MCF 10A (cell line): ENCODE measurements at regions of chr2 and their contacts with region 1.

Region 1: GRCh38 chr2:187499941-187500532 is 52.0 kb upstream of the CALCRL start:
- DNase-seq: peak; percentile 76
- H3K4me3 Mint-ChIP-seq: no peak overlapping the region
- H3K27ac Mint-ChIP-seq: no peak overlapping the region
- H3K4me1 Mint-ChIP-seq: peaks cover 12% of the 10 kb centered on the region
- H3K27me3 Mint-ChIP-seq: no peaks in the 10 kb centered on the region
- CTCF ChIP-seq: peak; percentile 79

Region 2: DNA sequence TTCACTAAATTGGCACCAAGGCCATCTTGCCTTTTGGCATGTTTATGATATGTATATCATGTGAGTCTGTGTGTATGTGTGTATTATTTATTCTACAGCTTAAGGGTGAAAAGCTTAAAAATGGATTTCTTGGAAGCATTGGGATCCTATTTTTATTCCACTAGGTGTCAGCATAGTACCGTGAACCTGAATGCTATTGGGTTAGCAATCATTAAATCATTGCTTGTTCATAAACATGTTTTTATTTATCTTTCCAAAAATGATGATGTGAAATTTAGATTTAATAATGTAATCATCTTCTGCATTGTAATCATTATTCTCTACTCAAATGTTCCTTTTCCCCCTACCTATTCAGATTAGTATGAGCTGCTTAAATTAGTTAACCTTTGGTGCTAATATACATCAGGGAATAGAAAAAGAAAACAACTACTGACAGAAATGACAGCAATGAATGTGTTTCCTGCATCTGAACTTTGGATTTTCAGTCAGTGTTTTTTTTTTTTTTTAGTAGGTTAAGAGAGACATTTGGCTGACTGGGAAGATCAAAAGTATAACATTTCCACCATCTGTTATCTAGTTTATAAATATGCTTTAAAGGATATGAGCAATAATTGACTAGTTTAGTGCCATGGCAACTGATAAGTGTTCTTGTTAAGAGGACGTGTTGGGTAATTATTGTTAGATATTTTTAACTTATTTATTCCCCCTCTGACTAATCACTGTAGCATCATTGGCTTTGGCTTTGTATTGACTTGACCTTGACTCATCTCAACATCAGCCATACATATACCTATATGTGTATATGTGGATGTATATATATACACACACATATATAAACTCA is 636.9 kb before region 1 on chr2:
- CTCF ChIA-PET with region 1: interaction called, 7 read pairs
- POLR2A ChIA-PET with region 1: no interaction called
- intact Hi-C with region 1: loop called (anchors 5 kb)
- DNase-seq: peak; percentile 57
- H3K4me3 Mint-ChIP-seq: no peak overlapping the region
- H3K27ac Mint-ChIP-seq: no peak overlapping the region
- H3K4me1 Mint-ChIP-seq: no peaks in the 10 kb centered on the region
- H3K27me3 Mint-ChIP-seq: no peaks in the 10 kb centered on the region
- CTCF ChIP-seq: peak; percentile 74

Region 3: DNA sequence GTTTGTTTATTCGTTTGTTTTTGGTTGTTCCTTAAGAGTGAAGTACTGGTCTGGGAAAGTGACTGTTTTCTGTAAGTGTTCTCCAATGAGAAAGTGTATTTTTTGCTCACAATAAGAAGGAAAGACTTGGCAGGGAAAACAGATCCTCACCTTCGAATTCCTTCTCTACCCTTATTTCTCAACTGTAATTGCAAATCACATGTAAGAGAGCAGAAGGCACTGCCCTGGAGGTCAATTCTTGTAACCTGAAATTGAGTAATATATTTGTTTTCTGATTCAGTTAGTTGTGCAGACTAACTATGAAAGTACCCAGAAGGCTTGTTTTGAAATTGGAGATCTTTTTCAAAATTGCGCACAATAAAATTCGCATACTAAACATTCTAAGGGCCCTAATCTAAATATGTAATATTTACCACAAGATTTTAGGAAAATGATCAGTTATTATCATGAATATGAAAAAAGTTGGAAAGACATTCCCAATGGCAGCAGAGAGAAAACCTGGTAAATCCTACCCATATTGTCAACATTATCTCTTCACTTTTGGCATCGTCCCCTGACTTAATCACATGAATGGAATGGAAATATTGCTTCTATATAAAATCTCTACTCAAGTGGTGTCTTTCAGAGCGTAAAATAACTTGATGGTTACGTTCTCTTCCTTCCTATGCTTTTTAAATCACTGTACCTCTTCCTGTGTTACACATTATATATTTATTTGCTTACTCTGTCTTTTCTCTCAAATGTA is 30.1 kb after region 1 on chr2:
- CTCF ChIA-PET with region 1: interaction called, 39 read pairs
- POLR2A ChIA-PET with region 1: interaction called, 6 read pairs
- intact Hi-C with region 1: no loop called
- DNase-seq: peak; percentile 91
- H3K4me3 Mint-ChIP-seq: peak overlapping the region; percentile 59
- H3K27ac Mint-ChIP-seq: peak overlapping the region; percentile 82
- H3K4me1 Mint-ChIP-seq: peaks cover 34% of the 10 kb centered on the region
- H3K27me3 Mint-ChIP-seq: no peaks in the 10 kb centered on the region
- CTCF ChIP-seq: no peak

Region 4: DNA sequence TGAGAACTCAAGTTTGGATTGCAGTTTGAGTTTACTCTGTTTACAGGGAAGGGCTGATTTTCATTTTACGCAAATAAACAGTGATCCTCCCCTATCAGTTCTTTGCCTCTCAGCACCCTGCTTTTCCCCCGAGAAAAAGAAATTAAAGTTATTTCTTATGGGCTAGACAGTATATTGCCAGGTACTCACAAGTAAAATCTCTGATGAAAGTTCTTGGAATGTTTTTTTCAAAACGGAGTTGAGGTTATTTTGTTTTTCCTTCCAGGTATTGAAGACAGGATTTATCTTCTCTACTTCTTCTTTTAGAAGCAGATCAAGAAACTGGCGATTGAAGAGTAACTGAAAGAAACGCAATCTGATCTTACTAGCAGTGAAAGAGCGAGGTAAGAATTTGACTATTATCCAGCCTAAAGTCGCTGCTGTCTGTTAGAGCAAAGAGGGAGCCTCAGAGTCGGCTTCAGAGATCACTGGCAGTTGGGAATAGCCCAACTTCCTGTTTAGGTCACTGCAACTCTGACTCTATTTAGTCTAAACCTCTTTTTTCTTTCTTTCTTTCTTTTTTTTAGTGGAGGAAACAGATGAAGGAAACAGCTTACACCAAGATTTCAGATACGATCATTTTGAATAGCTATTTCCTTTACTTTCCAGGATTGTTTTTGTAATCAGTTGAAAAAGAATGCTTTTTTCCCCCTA is 54.1 kb after region 1 on chr2 and contains the start of gene TFPI:
- CTCF ChIA-PET with region 1: interaction called, 25 read pairs
- POLR2A ChIA-PET with region 1: interaction called, 13 read pairs
- intact Hi-C with region 1: no loop called
- DNase-seq: peak; percentile 72
- H3K4me3 Mint-ChIP-seq: peak within 1 kb of the TSS; percentile 87
- H3K27ac Mint-ChIP-seq: peak within 1 kb of the TSS; percentile 98
- H3K4me1 Mint-ChIP-seq: peaks cover 20% of the 10 kb centered on the region
- H3K27me3 Mint-ChIP-seq: no peaks in the 10 kb centered on the region
- CTCF ChIP-seq: no peak
- total RNA-seq, gene TFPI: 67.4 and 71.1 TPM in 2 replicates

Region 5: GRCh38 chr2:187574969-187575750 is 75.1 kb after region 1 on chr2:
- CTCF ChIA-PET with region 1: interaction called, 363 read pairs
- POLR2A ChIA-PET with region 1: interaction called, 44 read pairs
- intact Hi-C with region 1: loop called (anchors 1 kb)
- DNase-seq: peak; percentile 11
- H3K4me3 Mint-ChIP-seq: no peak overlapping the region
- H3K27ac Mint-ChIP-seq: peak overlapping the region; percentile 77
- H3K4me1 Mint-ChIP-seq: peaks cover 9% of the 10 kb centered on the region
- H3K27me3 Mint-ChIP-seq: no peaks in the 10 kb centered on the region
- CTCF ChIP-seq: no peak

Region 6: GRCh38 chr2:188291617-188292347 is 791.7 kb after region 1 on chr2 and contains the start of gene GULP1:
- CTCF ChIA-PET with region 1: interaction called, 4 read pairs
- POLR2A ChIA-PET with region 1: interaction called, 3 read pairs
- intact Hi-C with region 1: loop called (anchors 10 kb)
- DNase-seq: peak; percentile 76
- H3K4me3 Mint-ChIP-seq: peak within 1 kb of the TSS; percentile 99
- H3K27ac Mint-ChIP-seq: peak within 1 kb of the TSS; percentile 87
- H3K4me1 Mint-ChIP-seq: peaks cover 22% of the 10 kb centered on the region
- H3K27me3 Mint-ChIP-seq: no peaks in the 10 kb centered on the region
- CTCF ChIP-seq: peak; percentile 73
- total RNA-seq, gene GULP1: 4.2 and 9.3 TPM in 2 replicates

Region 7: GRCh38 chr2:188381614-188382013 is 881.6 kb after region 1 on chr2:
- CTCF ChIA-PET with region 1: no interaction called
- POLR2A ChIA-PET with region 1: no interaction called
- intact Hi-C with region 1: loop called (anchors 5 kb)
- DNase-seq: peak; percentile 55
- H3K4me3 Mint-ChIP-seq: no peak overlapping the region
- H3K27ac Mint-ChIP-seq: peak overlapping the region; percentile 19
- H3K4me1 Mint-ChIP-seq: peaks cover 17% of the 10 kb centered on the region
- H3K27me3 Mint-ChIP-seq: no peaks in the 10 kb centered on the region
- CTCF ChIP-seq: no peak